Cardiac septum (tissue), 1 donor: ENCODE measurements at regions of chr7 and their contacts with region 1.

Region 1: GRCh38 chr7:70571403-70571934 is 560.5 kb upstream of the GALNT17 start:
- DNase-seq: no peak

Region 2: DNA sequence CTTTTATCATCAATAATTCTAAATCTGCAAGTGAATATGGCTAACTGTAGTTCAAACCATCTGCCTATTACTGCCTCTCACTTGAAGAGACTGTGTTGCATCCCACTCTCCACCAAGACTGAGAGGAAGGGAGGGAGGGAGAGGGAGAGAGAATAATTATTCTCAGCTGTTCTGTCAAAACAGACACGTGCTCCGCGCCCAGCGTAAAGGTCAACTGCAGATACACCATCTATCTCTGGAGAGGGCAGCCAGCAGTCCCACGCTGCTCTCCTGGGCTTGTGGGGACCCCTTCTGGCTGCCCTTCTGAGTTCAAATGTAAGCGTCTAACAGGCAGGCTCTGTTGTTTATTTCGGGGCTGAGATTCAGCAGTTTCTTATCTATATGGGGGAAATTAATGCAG is 65.0 kb before region 1 on chr7:
- intact Hi-C with region 1: no loop called
- DNase-seq: no peak

Region 3: DNA sequence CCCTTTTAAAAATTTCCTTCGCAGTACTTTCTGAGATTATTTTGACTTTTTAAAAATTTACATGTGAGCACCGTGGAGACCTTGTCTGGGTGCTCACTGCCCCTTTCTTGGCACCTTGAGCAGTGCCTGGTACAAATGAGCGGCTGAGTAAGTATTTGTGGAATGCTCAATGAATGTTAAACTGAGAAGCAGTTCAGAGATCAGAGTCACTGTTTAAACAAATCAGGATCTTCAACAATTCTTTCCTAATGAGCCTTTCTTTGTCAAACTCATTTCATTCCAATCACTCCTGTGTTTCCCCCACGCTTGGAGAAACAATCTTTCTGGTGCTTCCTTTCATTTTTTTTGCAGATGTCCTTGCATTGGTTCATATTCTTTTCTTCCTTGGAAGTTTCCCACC is 50.9 kb before region 1 on chr7:
- intact Hi-C with region 1: no loop called
- DNase-seq: no peak

Region 4: DNA sequence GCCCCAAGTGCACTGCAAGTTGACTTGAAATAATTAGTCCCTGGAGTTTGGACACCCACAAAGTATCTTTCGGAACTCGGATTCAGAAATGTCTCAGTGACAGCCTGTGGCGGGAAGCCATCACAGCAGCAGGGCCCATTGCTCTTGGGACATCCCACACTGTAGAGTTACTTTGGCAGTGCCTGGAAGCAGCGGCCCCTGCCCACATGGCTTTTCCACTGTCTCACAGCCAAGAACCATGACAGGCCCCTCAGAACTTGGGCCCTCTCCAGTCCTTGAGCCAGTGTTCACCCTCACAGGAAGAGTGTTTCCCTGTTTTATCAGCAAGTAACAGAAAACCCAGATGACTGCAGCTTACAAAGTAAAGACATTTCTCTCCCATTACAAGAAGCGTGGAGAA is 83.5 kb after region 1 on chr7:
- intact Hi-C with region 1: loop called (anchors 5 kb)
- DNase-seq: no peak